Head of caudate nucleus (tissue), 42 donors: ENCODE measurements at regions of chr17 and their contacts with region 1.

Region 1: GRCh38 chr17:10226930-10227685 is 28.7 kb upstream of the GAS7 start:
- DNase-seq: peak; percentile 21 to 86 (median 66)

Region 2: DNA sequence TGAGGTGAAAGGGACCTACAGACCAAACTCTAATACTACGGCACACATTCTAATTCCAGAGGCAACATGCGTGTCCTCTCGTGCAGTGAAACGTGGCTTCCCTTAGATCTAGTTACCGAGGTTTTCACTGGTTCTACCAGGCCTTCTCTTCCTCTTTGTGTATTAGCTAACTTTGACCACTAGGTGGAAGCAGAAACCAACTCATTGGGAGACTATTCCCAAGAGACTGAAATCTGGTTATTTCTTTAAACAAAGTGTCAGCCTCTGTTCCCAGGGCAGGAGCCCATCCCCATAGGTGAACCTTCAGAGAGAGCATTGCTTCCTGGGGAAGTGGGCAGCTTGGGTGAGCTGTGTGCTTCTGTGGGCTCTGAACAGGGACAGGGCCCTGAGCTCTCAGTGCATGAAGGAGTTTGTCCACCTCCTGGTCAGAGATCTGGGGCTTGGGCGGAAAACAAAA is 302.3 kb before region 1 on chr17:
- intact Hi-C with region 1: loop called (anchors 10 kb)
- DNase-seq: peak in 11 of 42 donors; percentile 29 to 79 (median 52)

Region 3: DNA sequence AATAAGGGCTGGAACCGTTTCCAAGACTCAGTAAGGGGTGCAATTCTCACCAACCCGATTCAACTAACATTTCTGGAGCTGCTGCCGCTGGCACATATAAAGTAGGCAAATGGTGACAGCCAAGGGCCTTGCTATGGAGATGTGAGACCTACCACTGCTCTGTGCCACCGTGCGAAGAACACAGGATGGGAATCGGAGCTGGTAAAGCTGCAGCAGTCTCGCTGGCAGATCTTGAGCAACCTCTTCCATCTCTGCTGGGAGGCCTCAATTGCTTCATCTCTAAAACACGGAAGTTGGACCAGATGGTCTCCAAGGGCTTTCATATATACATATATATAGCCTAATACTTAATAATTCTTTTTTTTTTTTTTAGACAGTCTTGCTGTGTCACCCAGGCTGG is 193.1 kb before region 1 on chr17:
- intact Hi-C with region 1: loop called (anchors 10 kb)
- DNase-seq: peak in 1 of 42 donors; percentile 67

Region 4: GRCh38 chr17:10115071-10115539 is 112.0 kb before region 1 on chr17:
- intact Hi-C with region 1: loop called (anchors 5 kb)
- DNase-seq: peak; percentile 56 to 96 (median 83)

Region 5: GRCh38 chr17:10305398-10305797 is 78.3 kb after region 1 on chr17:
- intact Hi-C with region 1: no loop called
- DNase-seq: peak in 1 of 42 donors; percentile 23

Region 6: DNA sequence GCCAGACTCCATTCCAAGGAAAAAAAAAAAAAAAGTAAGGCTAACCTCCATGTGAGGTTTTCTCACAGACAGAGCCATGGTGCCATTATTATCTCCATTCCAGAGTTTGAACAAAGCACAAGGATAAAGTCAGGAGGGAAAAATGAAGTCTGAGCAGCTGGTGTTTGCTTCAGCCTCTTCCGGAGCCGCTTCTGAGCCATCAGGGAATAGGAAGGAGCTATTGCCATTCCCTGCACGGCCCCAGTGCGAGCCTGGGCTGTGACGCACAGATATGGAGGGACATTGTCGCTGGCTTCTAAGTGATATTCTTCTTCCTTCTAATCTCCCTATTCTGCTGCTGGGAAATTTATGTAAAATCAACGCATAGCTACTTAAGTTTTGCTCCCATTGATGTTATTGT is 680.3 kb after region 1 on chr17:
- intact Hi-C with region 1: no loop called
- DNase-seq: no peak